Esophagus squamous epithelium (tissue), 5 donors: ENCODE measurements at regions of chr16 and their contacts with region 1.

Region 1: GRCh38 chr16:77169650-77170236 is 21.2 kb upstream of the MON1B start:
- DNase-seq: no peak
- H3K4me3 ChIP-seq: no peak overlapping the region
- H3K27ac ChIP-seq: no peak overlapping the region
- H3K4me1 ChIP-seq: no peaks in the 10 kb centered on the region
- H3K27me3 ChIP-seq: peaks cover 0 to 33% (median 0%) of the 10 kb centered on the region in 4 donors
- CTCF ChIP-seq: peak in 5 of 6 experiments; percentile 34 to 62 (median 50)
- POLR2A ChIP-seq: no peak

Region 2: GRCh38 chr16:75794426-75794825 is 1375.3 kb before region 1 on chr16:
- intact Hi-C with region 1: loop called (anchors 10 kb)
- DNase-seq: no peak
- H3K4me3 ChIP-seq: no peak overlapping the region
- H3K27ac ChIP-seq: no peak overlapping the region
- H3K4me1 ChIP-seq: no peaks in the 10 kb centered on the region
- H3K27me3 ChIP-seq: no peaks in the 10 kb centered on the region
- CTCF ChIP-seq: no peak
- POLR2A ChIP-seq: no peak

Region 3: GRCh38 chr16:77211880-77212740 is 42.4 kb after region 1 on chr16:
- intact Hi-C with region 1: no loop called
- DNase-seq: no peak
- H3K4me3 ChIP-seq: peak overlapping the region; percentile 54 to 74 (median 68)
- H3K27ac ChIP-seq: peak overlapping the region; percentile 68 to 83 (median 80)
- H3K4me1 ChIP-seq: peaks cover 12 to 26% (median 12%) of the 10 kb centered on the region in 3 donors
- H3K27me3 ChIP-seq: peaks cover 0 to 6% (median 0%) of the 10 kb centered on the region in 4 donors
- CTCF ChIP-seq: peak in 1 of 6 experiments; percentile 34
- POLR2A ChIP-seq: peak in 1 of 4 donors; percentile 30